ENCODE measurements at regions of chr3 and their contacts with region 1.

Region 1: DNA sequence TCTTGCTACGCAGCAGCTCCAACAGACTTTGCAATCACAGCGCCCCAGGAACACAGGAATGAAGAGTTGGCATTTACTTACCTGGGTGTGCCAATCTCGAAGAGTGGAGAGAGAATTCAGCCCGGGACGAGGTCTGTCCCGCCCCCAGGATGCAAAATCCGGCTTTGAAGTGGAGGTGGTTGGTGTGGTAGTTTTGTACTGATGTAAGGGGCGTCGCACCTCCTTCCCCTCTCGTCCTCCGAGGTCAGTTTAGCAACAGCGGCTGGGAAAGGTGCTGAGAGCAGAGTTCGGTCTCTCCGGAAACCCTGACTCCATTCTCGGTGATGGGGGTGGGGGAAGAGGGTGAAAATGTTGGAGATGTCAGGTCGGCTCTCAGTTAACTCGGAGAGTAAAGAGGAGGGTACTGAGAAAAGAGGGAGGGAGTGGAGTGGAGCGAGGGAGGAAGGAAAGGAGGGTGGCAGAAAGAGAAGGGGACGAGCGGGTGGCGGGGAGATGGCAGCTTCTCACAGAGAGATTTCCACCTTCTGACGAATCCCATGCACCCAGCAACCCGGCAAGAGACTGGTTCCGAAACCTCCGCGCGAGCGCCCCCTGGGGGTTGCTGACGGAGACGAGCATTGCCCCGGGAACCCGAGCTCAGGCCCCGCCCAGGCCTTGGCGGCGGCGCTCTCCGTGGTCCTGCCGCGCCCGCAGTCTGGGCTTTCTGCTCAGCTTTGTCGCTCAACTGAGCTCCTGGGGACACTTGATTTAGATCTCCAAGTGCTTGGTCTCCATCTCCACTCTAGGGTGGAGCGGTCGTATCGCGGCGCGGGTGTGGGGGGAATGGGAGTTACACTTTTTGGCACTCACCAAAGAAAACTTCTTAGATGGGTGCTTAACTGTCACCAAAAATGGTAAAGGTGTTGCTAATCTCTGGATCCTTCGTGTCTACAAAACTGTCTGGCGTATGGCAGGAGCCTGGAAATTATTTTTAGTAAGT is at the start of gene CPNE4:
- DNase-seq: peak; percentile 100
- H3K4me3 Mint-ChIP-seq: peak within 1 kb of the TSS; percentile 93
- H3K27ac Mint-ChIP-seq: peak within 1 kb of the TSS; percentile 75
- H3K4me1 Mint-ChIP-seq: peaks cover 34% of the 10 kb centered on the region
- H3K27me3 Mint-ChIP-seq: no peaks in the 10 kb centered on the region
- CTCF ChIP-seq: peak; percentile 98
- total RNA-seq, gene CPNE4: 23.2 and 31.1 TPM in 2 replicates

Region 2: DNA sequence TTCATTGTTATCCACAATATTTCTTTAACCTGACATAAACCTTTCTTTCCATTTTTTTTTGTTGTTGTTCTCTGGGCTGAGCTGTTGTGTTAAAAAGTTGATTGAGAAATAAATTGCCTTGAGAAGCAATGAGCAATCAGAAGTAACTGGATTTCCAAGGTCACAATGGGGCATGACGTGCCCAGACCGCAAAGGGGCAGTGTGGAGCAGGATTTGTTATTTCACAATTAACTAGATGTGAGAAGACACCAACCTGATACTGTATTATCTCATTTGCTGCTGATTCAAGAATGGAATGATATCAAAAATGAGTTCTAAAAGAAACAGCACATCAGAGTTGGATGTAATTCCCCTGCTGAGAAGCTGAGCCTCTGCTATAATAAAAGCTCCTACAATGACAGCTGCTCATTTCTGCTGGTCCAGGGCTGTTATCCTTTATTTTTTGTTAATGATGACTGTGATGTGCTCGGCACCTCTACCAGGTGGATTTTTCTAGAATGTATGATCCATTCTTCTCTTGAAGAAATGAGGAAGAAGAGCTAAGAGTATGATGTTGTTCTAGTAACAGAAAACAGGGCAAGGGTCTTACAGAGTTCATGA is 28.1 kb before region 1 on chr3:
- CTCF ChIA-PET with region 1: interaction called, 10 read pairs
- intact Hi-C with region 1: loop called (anchors 1 kb)
- DNase-seq: peak; percentile 78
- H3K4me3 Mint-ChIP-seq: no peak overlapping the region
- H3K27ac Mint-ChIP-seq: no peak overlapping the region
- H3K4me1 Mint-ChIP-seq: peaks cover 33% of the 10 kb centered on the region
- H3K27me3 Mint-ChIP-seq: no peaks in the 10 kb centered on the region
- CTCF ChIP-seq: peak; percentile 86

Region 3: GRCh38 chr3:132135628-132136333 is 101.0 kb after region 1 on chr3:
- CTCF ChIA-PET with region 1: interaction called, 27 read pairs
- intact Hi-C with region 1: loop called (anchors 1 kb)
- DNase-seq: peak; percentile 80
- H3K4me3 Mint-ChIP-seq: peak overlapping the region; percentile 74
- H3K27ac Mint-ChIP-seq: peak overlapping the region; percentile 99
- H3K4me1 Mint-ChIP-seq: peaks cover 53% of the 10 kb centered on the region
- H3K27me3 Mint-ChIP-seq: no peaks in the 10 kb centered on the region
- CTCF ChIP-seq: no peak

Region 4: GRCh38 chr3:132205609-132206008 is 170.8 kb after region 1 on chr3:
- CTCF ChIA-PET with region 1: interaction called, 26 read pairs
- intact Hi-C with region 1: loop called (anchors 1 kb)
- DNase-seq: no peak
- H3K4me3 Mint-ChIP-seq: no peak overlapping the region
- H3K27ac Mint-ChIP-seq: no peak overlapping the region
- H3K4me1 Mint-ChIP-seq: peaks cover 7% of the 10 kb centered on the region
- H3K27me3 Mint-ChIP-seq: no peaks in the 10 kb centered on the region
- CTCF ChIP-seq: no peak

Region 5: DNA sequence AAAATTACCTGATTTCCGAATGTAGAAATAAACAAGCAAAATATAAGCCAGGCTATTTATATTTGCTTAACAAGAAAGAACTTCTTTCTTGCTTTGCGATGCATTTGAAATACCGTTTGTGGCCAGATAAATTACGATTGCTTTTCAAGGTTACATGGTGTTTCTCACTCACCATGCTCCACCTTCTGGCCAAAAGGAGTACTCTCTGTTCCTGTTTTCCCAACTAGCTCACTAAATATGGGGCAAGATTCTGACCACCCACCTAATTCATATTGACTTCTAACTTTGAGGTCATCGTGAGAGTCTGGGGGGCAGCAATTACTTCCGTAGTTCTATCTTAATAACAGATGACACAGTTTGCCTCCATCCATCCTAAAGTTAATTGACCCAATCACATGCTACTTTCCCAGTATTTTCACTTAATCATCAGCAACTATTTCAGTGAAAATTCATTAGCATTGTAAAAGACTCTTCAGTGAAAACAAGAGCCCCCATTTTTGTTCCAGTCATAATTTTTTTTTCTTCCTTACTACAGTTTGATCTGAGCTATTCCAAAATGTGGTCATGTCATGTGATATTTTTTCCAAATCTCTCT is 308.3 kb after region 1 on chr3:
- CTCF ChIA-PET with region 1: interaction called, 6 read pairs
- intact Hi-C with region 1: loop called (anchors 10 kb)
- DNase-seq: peak; percentile 72
- H3K4me3 Mint-ChIP-seq: no peak overlapping the region
- H3K27ac Mint-ChIP-seq: peak overlapping the region; percentile 35
- H3K4me1 Mint-ChIP-seq: peaks cover 48% of the 10 kb centered on the region
- H3K27me3 Mint-ChIP-seq: no peaks in the 10 kb centered on the region
- CTCF ChIP-seq: peak; percentile 92

Measured in Calu3 (cell line).